Heart left ventricle (tissue), 16 donors: ENCODE measurements at regions of chr12 and their contacts with region 1.

Region 1: GRCh38 chr12:131949431-131950181 is at the start of gene EP400:
- DNase-seq: peak; percentile 96 to 98 (median 97)
- ATAC-seq: peak; percentile 98 to 99 (median 98)
- H3K4me3 ChIP-seq: peak within 1 kb of the TSS; percentile 62 to 99 (median 92)
- H3K27ac ChIP-seq: peak within 1 kb of the TSS; percentile 46 to 87 (median 81)
- H3K4me1 ChIP-seq: peaks cover 0 to 47% (median 15%) of the 10 kb centered on the region in 12 donors
- H3K27me3 ChIP-seq: no peaks in the 10 kb centered on the region
- CTCF ChIP-seq: peak; percentile 14 to 84 (median 61)
- POLR2A ChIP-seq: peak in 1 of 2 donors; percentile 57
- total RNA-seq, gene EP400: 10.3 to 27.8 (median 18.3) TPM

Region 2: GRCh38 chr12:131710464-131711457 is 238.8 kb before region 1 on chr12 and contains the start of gene SFSWAP:
- intact Hi-C with region 1: loop called in 2 of 10 experiments (anchors 5 to 10 kb)
- DNase-seq: peak; percentile 74 to 88 (median 80)
- ATAC-seq: peak; percentile 86 to 98 (median 97)
- H3K4me3 ChIP-seq: peak within 1 kb of the TSS; percentile 69 to 100 (median 94)
- H3K27ac ChIP-seq: peak within 1 kb of the TSS; percentile 90 to 99 (median 96)
- H3K4me1 ChIP-seq: peaks cover 2 to 27% (median 21%) of the 10 kb centered on the region in 12 donors
- H3K27me3 ChIP-seq: no peaks in the 10 kb centered on the region
- CTCF ChIP-seq: peak in 1 of 12 donors; percentile 25
- POLR2A ChIP-seq: peak in 1 of 2 donors; percentile 37
- total RNA-seq, gene SFSWAP: 10.4 to 25.1 (median 18.6) TPM

Region 3: DNA sequence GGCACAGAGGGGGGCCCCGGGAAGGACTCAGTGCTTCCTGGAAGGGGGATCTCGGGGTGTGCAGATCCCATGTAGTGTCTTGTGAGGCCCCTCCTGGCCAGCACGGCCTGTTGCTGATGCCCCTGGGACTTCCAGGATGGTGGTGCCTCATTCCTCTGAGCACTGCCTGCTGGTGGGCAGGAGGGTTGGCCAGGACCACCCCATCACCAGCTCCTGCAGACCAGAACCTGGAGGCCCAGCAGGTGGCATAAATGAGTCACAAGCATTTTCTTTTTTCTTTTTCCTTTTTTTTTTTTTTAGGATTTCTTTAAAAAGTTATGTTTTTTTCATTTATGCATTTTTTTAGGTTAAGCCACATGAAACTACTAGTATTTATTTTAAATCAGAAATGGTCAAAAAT is 113.4 kb before region 1 on chr12:
- intact Hi-C with region 1: loop called in 6 of 10 experiments (anchors 5 to 10 kb)
- DNase-seq: no peak
- ATAC-seq: no peak
- H3K4me3 ChIP-seq: no peak overlapping the region
- H3K27ac ChIP-seq: no peak overlapping the region
- H3K4me1 ChIP-seq: peaks cover 0 to 10% (median 3%) of the 10 kb centered on the region in 12 donors
- H3K27me3 ChIP-seq: peaks cover 3 to 42% (median 26%) of the 10 kb centered on the region in 9 donors
- CTCF ChIP-seq: peak in 8 of 12 donors; percentile 9 to 61 (median 41)
- POLR2A ChIP-seq: no peak

Region 4: DNA sequence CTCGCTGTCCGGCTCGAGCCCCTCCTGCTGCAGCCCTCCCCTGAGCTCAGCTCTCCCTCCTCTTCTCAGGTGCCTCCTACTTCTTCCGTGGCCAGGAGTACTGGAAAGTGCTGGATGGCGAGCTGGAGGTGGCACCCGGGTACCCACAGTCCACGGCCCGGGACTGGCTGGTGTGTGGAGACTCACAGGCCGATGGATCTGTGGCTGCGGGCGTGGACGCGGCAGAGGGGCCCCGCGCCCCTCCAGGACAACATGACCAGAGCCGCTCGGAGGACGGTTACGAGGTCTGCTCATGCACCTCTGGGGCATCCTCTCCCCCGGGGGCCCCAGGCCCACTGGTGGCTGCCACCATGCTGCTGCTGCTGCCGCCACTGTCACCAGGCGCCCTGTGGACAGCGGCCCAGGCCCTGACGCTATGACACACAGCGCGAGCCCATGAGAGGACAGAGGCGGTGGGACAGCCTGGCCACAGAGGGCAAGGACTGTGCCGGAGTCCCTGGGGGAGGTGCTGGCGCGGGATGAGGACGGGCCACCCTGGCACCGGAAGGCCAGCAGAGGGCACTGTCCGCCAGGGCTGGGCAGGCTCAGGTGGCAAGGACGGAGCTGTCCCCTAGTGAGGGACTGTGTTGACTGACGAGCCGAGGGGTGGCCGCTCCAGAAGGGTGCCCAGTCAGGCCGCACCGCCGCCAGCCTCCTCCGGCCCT is 98.6 kb before region 1 on chr12:
- intact Hi-C with region 1: loop called in 4 of 10 experiments (anchors 5 to 10 kb)
- DNase-seq: peak in 3 of 5 donors; percentile 18 to 60 (median 49)
- ATAC-seq: peak in 2 of 4 donors; percentile 85 to 86
- H3K4me3 ChIP-seq: no peak overlapping the region
- H3K27ac ChIP-seq: no peak overlapping the region
- H3K4me1 ChIP-seq: peaks cover 0 to 7% (median 0%) of the 10 kb centered on the region in 12 donors
- H3K27me3 ChIP-seq: peaks cover 0 to 24% (median 6%) of the 10 kb centered on the region in 9 donors
- CTCF ChIP-seq: peak in 6 of 12 donors; percentile 43 to 83 (median 70)
- POLR2A ChIP-seq: no peak

Region 5: GRCh38 chr12:131928711-131929580 is 20.7 kb before region 1 on chr12 and contains the start of gene PUS1:
- intact Hi-C with region 1: loop called in 2 of 10 experiments (anchors 2 kb)
- DNase-seq: peak; percentile 95 to 97 (median 96)
- ATAC-seq: peak; percentile 82 to 97 (median 94)
- H3K4me3 ChIP-seq: peak within 1 kb of the TSS; percentile 62 to 94 (median 82)
- H3K27ac ChIP-seq: peak within 1 kb of the TSS; percentile 86 to 97 (median 92)
- H3K4me1 ChIP-seq: peaks cover 0 to 34% (median 16%) of the 10 kb centered on the region in 12 donors
- H3K27me3 ChIP-seq: no peaks in the 10 kb centered on the region
- CTCF ChIP-seq: no peak
- POLR2A ChIP-seq: peak in 1 of 2 donors; percentile 91
- total RNA-seq, gene PUS1: 6.1 to 10.7 (median 8.1) TPM